ENCODE measurements at regions of chr1 and their contacts with region 1.

Region 1: DNA sequence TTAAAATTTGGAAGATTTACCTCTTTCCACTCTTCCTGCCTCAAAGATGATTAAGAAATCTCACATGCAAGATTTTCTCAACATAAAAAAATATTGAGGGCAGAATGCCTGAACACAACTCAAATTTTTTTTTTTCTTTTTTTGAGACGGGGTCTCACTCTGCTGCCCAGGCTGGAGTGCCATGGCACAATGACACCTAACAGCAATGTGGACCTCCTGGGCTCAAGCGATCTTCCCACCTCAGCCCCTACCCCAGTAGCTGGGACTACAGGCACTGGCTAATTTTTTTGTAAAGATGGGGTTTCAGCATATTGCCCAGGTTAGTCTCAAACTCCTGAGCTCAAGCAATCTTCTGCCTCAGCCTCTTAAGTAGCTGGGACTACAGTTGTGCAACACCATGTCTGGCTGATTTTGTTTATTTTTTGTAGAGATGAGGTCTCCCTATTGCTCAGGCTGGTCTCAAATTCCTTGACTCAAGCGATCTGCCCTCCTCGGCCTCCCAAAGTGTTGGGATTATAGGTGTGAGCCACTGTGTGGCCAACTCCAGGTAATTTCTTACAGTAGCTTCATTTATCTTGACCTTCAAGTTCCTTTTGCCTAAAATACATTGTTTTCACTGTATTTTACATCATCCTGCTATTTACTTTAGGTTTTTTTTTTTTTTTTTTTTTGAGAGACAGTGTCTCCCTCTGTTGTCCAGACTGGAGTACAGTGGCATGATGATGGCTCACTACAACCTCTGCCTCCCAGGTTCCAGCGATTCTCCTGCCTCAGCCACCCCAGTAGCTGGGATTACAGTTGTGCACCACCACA is 10.4 kb downstream of the NUCKS1 start:
- DNase-seq: no peak
- ATAC-seq: no peak
- H3K4me3 ChIP-seq: no peak overlapping the region
- H3K4me3 Mint-ChIP-seq: no peak overlapping the region
- H3K27ac ChIP-seq: no peak overlapping the region
- H3K27ac Mint-ChIP-seq: peak overlapping the region in 1 of 2 donors; percentile 36
- H3K4me1 ChIP-seq: peaks cover 4 to 8% of the 10 kb centered on the region in 2 experiments
- H3K4me1 Mint-ChIP-seq: peaks cover 38 to 57% (median 55%) of the 10 kb centered on the region in 3 donors
- H3K27me3 ChIP-seq: no peaks in the 10 kb centered on the region
- H3K27me3 Mint-ChIP-seq: no peaks in the 10 kb centered on the region

Region 2: GRCh38 chr1:205678286-205679111 is 61.1 kb before region 1 on chr1:
- CTCF ChIA-PET with region 1: no interaction called
- POLR2A ChIA-PET with region 1: interaction called in 1 of 2 experiments, 11 read pairs
- DNase-seq: no peak
- ATAC-seq: no peak
- H3K4me3 ChIP-seq: no peak overlapping the region
- H3K4me3 Mint-ChIP-seq: peak overlapping the region; percentile 70 to 77 (median 75)
- H3K27ac ChIP-seq: no peak overlapping the region
- H3K27ac Mint-ChIP-seq: no peak overlapping the region
- H3K4me1 ChIP-seq: peaks cover 0 to 15% of the 10 kb centered on the region in 2 experiments
- H3K4me1 Mint-ChIP-seq: peaks cover 11 to 14% (median 14%) of the 10 kb centered on the region in 3 donors
- H3K27me3 ChIP-seq: peaks cover 0 to 35% of the 10 kb centered on the region in 2 experiments
- H3K27me3 Mint-ChIP-seq: peaks cover 12 to 13% of the 10 kb centered on the region in 2 donors

Measured in T-cell (primary cell).